ENCODE measurements at regions of chr17 and their contacts with region 1.

Region 1: DNA sequence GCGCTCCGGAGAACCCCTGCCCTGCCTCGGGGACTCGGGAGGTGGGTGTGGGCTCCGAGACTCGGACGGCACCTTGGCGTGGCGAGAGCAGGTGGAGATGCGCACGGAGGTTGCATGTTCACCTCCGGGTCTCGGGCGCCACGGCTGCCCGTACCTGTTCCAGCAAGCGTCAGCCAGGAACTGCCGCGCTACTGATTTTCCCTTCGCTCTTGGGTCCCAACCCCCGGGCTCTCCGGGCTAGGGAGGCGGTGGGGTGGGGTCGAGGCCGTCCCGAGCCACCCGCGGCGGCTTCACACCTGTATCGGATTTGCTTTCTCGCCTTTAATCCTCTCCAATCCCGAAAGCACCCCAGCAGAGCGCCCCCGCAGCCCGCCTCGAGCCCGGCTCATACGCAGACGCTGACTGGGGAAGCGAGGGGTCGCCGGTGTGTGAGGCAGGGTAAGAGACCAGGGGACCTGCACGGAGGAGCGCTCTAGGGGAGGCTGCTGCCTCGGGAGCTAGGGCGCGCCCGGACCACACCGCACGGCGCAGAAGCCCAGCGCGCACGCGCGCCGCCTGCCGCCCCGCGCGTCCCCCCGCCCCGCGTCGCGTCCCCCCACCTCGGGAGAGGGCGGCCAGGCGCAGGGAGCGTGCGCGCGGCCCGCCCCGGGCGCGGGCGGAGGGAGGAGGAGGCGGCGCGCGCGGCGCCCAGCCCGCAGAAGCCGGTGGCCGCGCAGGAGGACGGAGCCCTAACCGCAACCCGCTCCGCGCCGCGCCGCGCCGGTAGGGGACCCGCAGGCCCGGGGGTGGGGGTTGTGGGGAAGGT is at the start of gene DUSP14:
- DNase-seq: peak; percentile 83 to 94 (median 93)
- ATAC-seq: peak; percentile 87 to 91
- H3K4me3 ChIP-seq: peak within 1 kb of the TSS; percentile 73
- H3K27ac ChIP-seq: peak within 1 kb of the TSS; percentile 95
- H3K4me1 ChIP-seq: no peaks in the 10 kb centered on the region
- H3K27me3 ChIP-seq: no peaks in the 10 kb centered on the region
- total RNA-seq, gene DUSP14: 16.7 to 20.1 (median 18.4) TPM

Region 2: DNA sequence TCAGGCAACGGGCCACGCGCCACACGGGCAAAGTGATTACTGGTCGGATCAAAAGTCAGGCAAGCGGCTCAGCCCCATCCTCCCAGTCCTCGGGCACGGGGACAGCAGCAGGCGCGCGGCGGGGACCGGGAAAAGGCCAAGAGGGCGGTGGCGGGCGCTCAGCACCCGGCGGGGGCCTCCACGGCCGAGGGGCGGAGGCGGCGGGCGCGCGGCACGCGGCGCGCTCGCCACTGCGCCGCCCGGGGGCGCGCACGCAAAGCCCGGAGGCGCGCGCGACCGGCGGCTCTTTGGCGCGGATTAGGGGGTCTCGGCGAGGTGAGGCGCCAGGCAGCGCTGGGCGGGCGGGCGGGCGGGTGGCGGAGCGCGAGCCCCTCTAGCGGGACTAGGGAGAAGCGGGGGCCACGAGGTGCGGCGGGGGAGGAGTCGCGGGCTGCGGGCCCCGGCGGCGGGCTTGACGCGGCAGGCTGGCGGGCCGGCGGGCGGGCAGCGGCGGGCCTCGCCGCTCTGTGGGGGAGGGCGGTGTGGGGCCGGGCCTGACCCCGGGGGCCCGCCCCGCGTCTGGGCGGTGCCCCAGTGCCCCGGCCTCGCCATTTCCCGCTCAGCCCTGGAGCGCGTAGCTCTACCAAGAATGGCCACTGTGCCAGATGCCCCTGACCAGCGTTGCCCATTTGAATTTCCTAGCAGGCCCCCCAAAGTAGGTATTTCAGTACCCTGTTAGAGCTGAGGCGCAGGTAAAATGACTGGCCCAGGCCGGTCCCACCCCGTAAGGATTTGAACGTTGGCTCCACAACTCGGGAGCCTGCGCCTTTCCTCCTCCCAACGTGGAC is 82.6 kb before region 1 on chr17 and contains the starts of genes ACACA and TADA2A:
- intact Hi-C with region 1: loop called in 1 of 4 experiments (anchors 5 kb)
- DNase-seq: peak; percentile 86 to 92 (median 92)
- ATAC-seq: peak; percentile 98
- H3K4me3 ChIP-seq: peak within 1 kb of the TSS; percentile 75
- H3K27ac ChIP-seq: peak within 1 kb of the TSS; percentile 86
- H3K4me1 ChIP-seq: no peaks in the 10 kb centered on the region
- H3K27me3 ChIP-seq: no peaks in the 10 kb centered on the region
- total RNA-seq, gene ACACA: 18.4 to 24.8 (median 21.0) TPM
- total RNA-seq, gene TADA2A: 12.3 to 18.0 (median 14.2) TPM

Region 3: GRCh38 chr17:37535906-37536305 is 46.5 kb after region 1 on chr17:
- intact Hi-C with region 1: no loop called
- DNase-seq: no peak
- ATAC-seq: no peak
- H3K4me3 ChIP-seq: no peak overlapping the region
- H3K27ac ChIP-seq: no peak overlapping the region
- H3K4me1 ChIP-seq: no peaks in the 10 kb centered on the region
- H3K27me3 ChIP-seq: no peaks in the 10 kb centered on the region

Region 4: GRCh38 chr17:37546302-37546701 is 56.9 kb after region 1 on chr17:
- intact Hi-C with region 1: no loop called
- DNase-seq: no peak
- ATAC-seq: no peak
- H3K4me3 ChIP-seq: no peak overlapping the region
- H3K27ac ChIP-seq: no peak overlapping the region
- H3K4me1 ChIP-seq: no peaks in the 10 kb centered on the region
- H3K27me3 ChIP-seq: no peaks in the 10 kb centered on the region

Measured in right cardiac atrium (tissue), 5 donors.